SK-N-SH (cell line): ENCODE measurements at regions of chr2 and their contacts with region 1.

Region 1: DNA sequence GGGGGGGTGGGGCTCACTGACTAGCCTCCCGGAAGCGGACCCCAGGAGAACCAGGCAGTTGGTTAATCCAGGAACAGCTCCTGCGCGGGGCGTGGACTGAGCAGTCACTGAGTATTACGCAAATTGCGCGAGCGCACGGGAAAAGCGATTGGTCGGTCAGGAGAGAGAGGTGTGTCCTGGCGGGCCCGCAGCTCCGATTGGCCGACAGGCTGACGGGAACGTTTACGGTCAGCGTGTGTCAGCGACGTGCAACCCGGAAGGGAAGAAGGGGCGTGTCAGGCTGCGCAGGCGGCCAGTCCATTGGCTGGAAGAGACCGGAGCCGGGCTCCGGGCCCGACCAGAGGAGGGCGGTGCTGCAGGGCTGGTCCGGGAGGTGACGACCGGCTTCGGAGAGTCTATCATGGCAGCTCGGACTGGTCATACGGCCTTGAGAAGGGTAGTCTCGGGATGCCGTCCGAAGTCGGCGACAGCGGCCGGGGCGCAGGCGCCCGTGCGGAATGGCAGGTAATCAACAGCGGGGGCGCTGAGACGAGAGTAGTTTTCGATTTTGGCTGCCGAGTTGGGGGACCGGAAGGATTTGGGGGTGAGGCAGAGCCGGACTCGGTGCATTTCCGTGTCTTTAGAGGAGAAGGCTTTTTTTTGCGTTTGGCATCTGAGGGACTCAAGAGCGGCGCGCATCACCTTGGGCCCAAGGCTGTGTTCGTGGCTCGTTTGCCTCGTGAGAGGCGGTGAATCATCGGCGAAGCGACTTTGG is at the start of gene COQ10B:
- DNase-seq: peak; percentile 95
- H3K4me3 ChIP-seq: peak within 1 kb of the TSS; percentile 77 to 83
- H3K27ac ChIP-seq: peak within 1 kb of the TSS; percentile 92 to 100
- H3K4me1 ChIP-seq: no peaks in the 10 kb centered on the region; a peak in 2 of 4 replicates
- H3K27me3 ChIP-seq: no peaks in the 10 kb centered on the region
- CTCF ChIP-seq: peak; percentile 28
- EP300 ChIP-seq: no peak; a peak in 1 of 4 replicates
- RAD21 ChIP-seq: 0 out of 2 replicates have a peak, but pooled peaks have one; percentile 7
- polyA plus RNA-seq, gene COQ10B: 3.6 and 4.5 TPM in 2 replicates

Region 2: GRCh38 chr2:197416268-197416667 is 37.1 kb before region 1 on chr2:
- CTCF ChIA-PET with region 1: no interaction called
- POLR2A ChIA-PET with region 1: no interaction called
- DNase-seq: no peak
- H3K4me3 ChIP-seq: no peak overlapping the region
- H3K27ac ChIP-seq: no peak overlapping the region
- H3K4me1 ChIP-seq: no peaks in the 10 kb centered on the region
- H3K27me3 ChIP-seq: no peaks in the 10 kb centered on the region
- CTCF ChIP-seq: no peak
- EP300 ChIP-seq: no peak
- RAD21 ChIP-seq: no peak

Region 3: DNA sequence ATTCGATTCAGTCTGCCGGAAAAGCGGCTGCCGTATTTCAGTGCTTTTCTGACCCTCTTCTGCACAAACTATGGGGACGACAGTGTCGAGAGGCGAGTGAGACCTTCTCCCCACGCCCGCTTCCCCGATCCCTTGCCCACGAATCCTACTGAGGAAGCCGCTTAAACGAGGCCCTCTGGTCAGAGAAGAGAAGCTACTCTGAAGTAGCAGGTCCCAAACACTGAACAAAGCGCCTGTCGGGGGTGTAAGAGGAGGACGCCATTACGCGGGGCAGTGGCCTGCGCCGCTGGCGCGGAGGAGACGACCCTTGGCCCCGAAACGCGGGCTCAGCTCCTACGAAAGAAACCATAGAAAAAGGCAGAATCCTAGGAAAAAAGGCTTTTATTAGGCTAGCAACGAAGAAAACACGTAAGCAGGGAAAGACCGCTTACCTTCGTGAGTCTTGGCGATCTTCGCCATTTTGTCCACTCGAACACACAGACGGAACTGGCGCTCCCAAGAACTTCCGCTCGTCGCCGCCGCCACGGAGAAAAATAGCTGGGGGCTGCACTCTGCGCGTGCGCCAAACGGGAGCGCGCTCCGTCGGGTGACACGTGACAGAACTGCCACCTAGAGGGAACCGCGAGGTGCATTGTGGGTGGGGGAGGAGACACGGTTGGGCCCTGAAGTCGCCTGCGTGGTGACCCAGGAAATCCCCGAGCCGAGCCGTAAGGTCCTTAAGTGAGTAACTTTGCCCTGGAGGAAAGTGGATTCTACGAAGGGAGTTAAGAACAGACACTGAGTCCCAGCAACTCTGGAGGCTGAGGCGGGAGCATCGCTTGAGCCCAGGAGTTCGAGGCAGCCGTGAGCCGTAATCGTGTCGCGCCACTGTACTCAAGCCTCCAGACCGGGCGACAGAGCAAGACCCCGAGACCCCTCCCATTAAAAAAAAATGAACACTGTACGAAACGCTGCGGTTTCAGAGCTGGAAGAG is 18.5 kb before region 1 on chr2 and contains the start of gene SF3B1:
- CTCF ChIA-PET with region 1: no interaction called
- POLR2A ChIA-PET with region 1: interaction called, 15 read pairs
- DNase-seq: peak; percentile 95
- H3K4me3 ChIP-seq: peak within 1 kb of the TSS; percentile 84 to 91
- H3K27ac ChIP-seq: peak within 1 kb of the TSS; percentile 95
- H3K4me1 ChIP-seq: peaks cover 5 to 14% of the 10 kb centered on the region in 2 experiments; a peak in 3 of 4 replicates
- H3K27me3 ChIP-seq: no peaks in the 10 kb centered on the region
- CTCF ChIP-seq: no peak
- EP300 ChIP-seq: no peak
- RAD21 ChIP-seq: no peak
- polyA plus RNA-seq, gene SF3B1: 162 and 276 TPM in 2 replicates

Region 4: GRCh38 chr2:197472166-197472565 is 18.8 kb after region 1 on chr2:
- CTCF ChIA-PET with region 1: no interaction called
- POLR2A ChIA-PET with region 1: no interaction called
- DNase-seq: no peak
- H3K4me3 ChIP-seq: no peak overlapping the region
- H3K27ac ChIP-seq: no peak overlapping the region
- H3K4me1 ChIP-seq: no peaks in the 10 kb centered on the region
- H3K27me3 ChIP-seq: no peaks in the 10 kb centered on the region
- CTCF ChIP-seq: no peak
- EP300 ChIP-seq: no peak
- RAD21 ChIP-seq: no peak

Region 5: GRCh38 chr2:197828464-197829135 is 375.3 kb after region 1 on chr2:
- CTCF ChIA-PET with region 1: no interaction called
- POLR2A ChIA-PET with region 1: no interaction called
- DNase-seq: no peak
- H3K4me3 ChIP-seq: no peak overlapping the region
- H3K27ac ChIP-seq: peak overlapping the region; percentile 65 to 87; a peak in 3 of 4 replicates
- H3K4me1 ChIP-seq: peaks cover 0 to 24% of the 10 kb centered on the region in 2 experiments; a peak in 3 of 4 replicates
- H3K27me3 ChIP-seq: no peaks in the 10 kb centered on the region
- CTCF ChIP-seq: no peak
- EP300 ChIP-seq: peak in 1 of 2 experiments; percentile 69; a peak in 1 of 4 replicates
- RAD21 ChIP-seq: no peak